ENCODE measurements at regions of chr21 and their contacts with region 1.

Region 1: GRCh38 chr21:33761441-33762036 is 119.2 kb downstream of the ITSN1 start:
- DNase-seq: peak; percentile 81
- H3K4me3 ChIP-seq: no peak overlapping the region
- H3K27ac ChIP-seq: peak overlapping the region; percentile 13
- H3K4me1 ChIP-seq: peaks cover 10% of the 10 kb centered on the region
- H3K27me3 ChIP-seq: no peaks in the 10 kb centered on the region
- CTCF ChIP-seq: no peak

Region 2: DNA sequence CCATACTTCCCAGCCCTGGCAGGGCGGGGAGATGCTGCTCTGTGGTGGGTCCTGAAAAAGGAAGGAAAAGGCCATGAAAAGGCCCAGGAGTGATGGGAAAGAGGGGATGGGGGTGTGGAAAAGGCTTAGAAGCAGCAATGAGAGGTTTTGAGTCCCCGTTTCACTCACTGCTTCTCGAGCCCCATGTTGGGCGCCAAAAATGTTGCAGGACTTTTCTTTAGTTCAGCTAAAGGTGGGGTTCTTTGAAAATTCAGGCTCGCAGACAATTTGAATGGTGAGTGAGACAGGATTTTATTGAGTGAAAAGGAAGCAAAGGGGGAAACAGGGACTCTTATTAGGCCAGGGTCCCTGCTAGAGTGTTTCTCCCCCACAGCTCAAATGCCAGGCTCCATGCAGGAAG is 404.9 kb after region 1 on chr21:
- CTCF ChIA-PET with region 1: no interaction called
- dilution Hi-C with region 1: no loop called
- in situ Hi-C with region 1: no loop called
- intact Hi-C with region 1: no loop called
- DNase-seq: peak; percentile 23
- H3K4me3 ChIP-seq: no peak overlapping the region
- H3K27ac ChIP-seq: no peak overlapping the region
- H3K4me1 ChIP-seq: no peaks in the 10 kb centered on the region
- H3K27me3 ChIP-seq: no peaks in the 10 kb centered on the region
- CTCF ChIP-seq: no peak

Region 3: DNA sequence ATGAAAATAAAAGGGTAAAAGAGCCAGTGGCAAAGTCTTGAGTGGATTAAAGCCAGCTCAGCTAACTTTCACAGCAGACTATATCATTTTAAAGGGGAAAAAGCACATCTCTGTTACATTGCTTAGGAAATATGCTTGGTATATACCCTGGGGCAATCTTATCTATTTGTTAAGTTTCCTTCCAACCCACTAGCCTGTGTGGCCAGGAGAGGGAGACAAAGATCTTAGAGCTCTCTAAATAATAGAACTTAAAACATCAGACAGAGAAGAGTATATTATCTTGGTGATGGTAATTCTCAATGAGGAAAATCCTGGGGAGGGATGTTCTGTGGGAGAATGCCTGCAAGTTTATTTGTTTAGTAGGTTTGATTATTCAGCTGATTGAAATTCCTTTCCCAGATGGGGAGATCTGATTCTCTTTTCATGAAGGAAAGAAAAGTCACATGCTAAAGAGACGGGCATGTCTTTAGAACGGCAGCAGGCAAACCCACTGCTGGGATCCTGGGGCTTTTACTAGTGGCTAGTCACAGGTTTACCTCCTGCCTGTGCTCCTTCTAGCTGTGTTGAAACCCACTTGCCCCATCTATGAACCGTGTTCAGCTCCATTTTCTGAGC is 605.9 kb after region 1 on chr21:
- CTCF ChIA-PET with region 1: interaction called, 12 read pairs
- dilution Hi-C with region 1: no loop called
- in situ Hi-C with region 1: no loop called
- intact Hi-C with region 1: no loop called
- DNase-seq: peak; percentile 72
- H3K4me3 ChIP-seq: no peak overlapping the region
- H3K27ac ChIP-seq: no peak overlapping the region
- H3K4me1 ChIP-seq: peaks cover 4% of the 10 kb centered on the region
- H3K27me3 ChIP-seq: no peaks in the 10 kb centered on the region
- CTCF ChIP-seq: peak; percentile 84 to 91

Measured in mammary epithelial cell (primary cell).